ENCODE measurements at regions of chr19 and their contacts with region 1.

Region 1: DNA sequence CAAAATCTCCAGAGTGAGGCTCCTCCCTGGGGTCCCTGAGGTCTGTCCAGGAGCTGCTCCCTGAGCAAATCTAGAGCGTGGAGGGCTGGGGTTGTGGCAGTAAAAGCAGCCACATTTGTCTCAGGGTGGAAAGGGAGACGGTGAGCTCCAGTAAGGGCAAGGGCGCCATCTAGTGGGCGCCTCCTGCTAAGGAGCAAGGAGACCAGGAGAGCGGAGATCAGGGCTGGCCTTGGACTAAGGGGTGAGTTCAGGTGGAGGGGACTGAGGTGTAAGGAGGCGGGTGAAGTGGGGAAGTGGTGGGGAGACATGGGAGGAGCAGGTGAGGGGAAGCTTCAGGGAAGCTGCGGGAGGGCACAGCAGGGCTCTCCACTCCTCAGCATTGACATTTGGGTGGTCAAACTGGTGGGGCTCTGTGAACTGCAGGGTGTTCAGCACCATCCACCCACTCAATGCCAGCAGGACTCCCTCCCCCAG is 5.3 kb upstream of the CEACAM21 start:
- DNase-seq: peak; percentile 61 to 84
- H3K4me3 ChIP-seq: no peak overlapping the region
- H3K4me1 ChIP-seq: no peaks in the 10 kb centered on the region
- H3K27me3 ChIP-seq: no peaks in the 10 kb centered on the region

Region 2: GRCh38 chr19:41449079-41449864 is 121.4 kb before region 1 on chr19:
- in situ Hi-C with region 1: loop called (anchors 5 kb)
- DNase-seq: peak; percentile 68 to 86
- H3K4me3 ChIP-seq: peak overlapping the region; percentile 22
- H3K4me1 ChIP-seq: no peaks in the 10 kb centered on the region
- H3K27me3 ChIP-seq: peaks cover 3% of the 10 kb centered on the region; the same call in 1 of the 2 replicates

Measured in HAP-1 (cell line).